G401 (cell line): ENCODE measurements at regions of chr20 and their contacts with region 1.

Region 1: GRCh38 chr20:49046087-49046900 is at the start of gene CSE1L:
- DNase-seq: peak; percentile 97
- total RNA-seq, gene CSE1L: 153 and 238 TPM in 2 replicates

Region 2: GRCh38 chr20:48999890-49000870 is 46.1 kb before region 1 on chr20:
- in situ Hi-C with region 1: loop called (anchors 10 kb)
- DNase-seq: no peak